Calu3 (cell line): ENCODE measurements at regions of chr14 and their contacts with region 1.

Region 1: DNA sequence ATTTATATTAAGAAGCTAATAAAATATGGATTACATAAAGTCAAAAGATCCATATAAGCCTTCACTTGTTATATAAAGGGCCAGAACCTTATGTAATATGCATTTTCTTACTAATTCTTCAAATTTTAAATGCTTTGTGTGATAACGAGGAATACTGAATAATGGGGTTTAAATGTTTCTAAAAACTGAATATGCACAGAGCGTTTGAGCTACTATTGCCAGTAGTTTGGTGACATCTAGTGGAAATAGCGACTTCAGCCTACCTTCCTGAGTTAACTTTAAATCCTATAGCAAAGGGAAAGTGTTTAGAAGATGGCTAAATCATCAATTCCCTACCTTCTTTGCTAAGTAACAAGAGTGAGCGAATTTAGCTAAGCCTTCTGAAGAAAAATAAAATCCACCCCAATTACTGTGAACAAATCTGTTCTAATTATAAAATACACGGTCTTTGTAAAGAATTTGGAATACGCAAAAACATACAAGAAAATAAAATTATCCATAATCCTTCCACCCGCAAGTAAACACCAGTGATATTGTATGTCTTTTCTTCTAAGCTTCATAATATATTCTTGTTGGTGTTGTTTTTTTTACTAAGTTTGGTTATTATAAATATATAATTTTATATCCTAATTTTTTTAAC is 115.5 kb upstream of the G2E3 start:
- DNase-seq: peak; percentile 7
- H3K4me3 Mint-ChIP-seq: no peak overlapping the region
- H3K27ac Mint-ChIP-seq: no peak overlapping the region
- H3K4me1 Mint-ChIP-seq: no peaks in the 10 kb centered on the region
- H3K27me3 Mint-ChIP-seq: peaks cover 22% of the 10 kb centered on the region
- CTCF ChIP-seq: no peak

Region 2: GRCh38 chr14:29999013-29999531 is 444.4 kb before region 1 on chr14:
- CTCF ChIA-PET with region 1: no interaction called
- intact Hi-C with region 1: loop called (anchors 10 kb)
- DNase-seq: no peak
- H3K4me3 Mint-ChIP-seq: no peak overlapping the region
- H3K27ac Mint-ChIP-seq: no peak overlapping the region
- H3K4me1 Mint-ChIP-seq: no peaks in the 10 kb centered on the region
- H3K27me3 Mint-ChIP-seq: no peaks in the 10 kb centered on the region
- CTCF ChIP-seq: no peak

Region 3: GRCh38 chr14:30375296-30375892 is 68.1 kb before region 1 on chr14:
- CTCF ChIA-PET with region 1: interaction called, 4 read pairs
- intact Hi-C with region 1: loop called (anchors 1 kb)
- DNase-seq: peak; percentile 67
- H3K4me3 Mint-ChIP-seq: no peak overlapping the region
- H3K27ac Mint-ChIP-seq: no peak overlapping the region
- H3K4me1 Mint-ChIP-seq: no peaks in the 10 kb centered on the region
- H3K27me3 Mint-ChIP-seq: peaks cover 64% of the 10 kb centered on the region
- CTCF ChIP-seq: peak; percentile 62

Region 4: GRCh38 chr14:30988509-30988908 is 545.0 kb after region 1 on chr14:
- CTCF ChIA-PET with region 1: no interaction called
- intact Hi-C with region 1: no loop called
- DNase-seq: no peak
- H3K4me3 Mint-ChIP-seq: no peak overlapping the region
- H3K27ac Mint-ChIP-seq: no peak overlapping the region
- H3K4me1 Mint-ChIP-seq: peaks cover 22% of the 10 kb centered on the region
- H3K27me3 Mint-ChIP-seq: no peaks in the 10 kb centered on the region
- CTCF ChIP-seq: no peak